ENCODE measurements at regions of chr22 and their contacts with region 1.

Region 1: DNA sequence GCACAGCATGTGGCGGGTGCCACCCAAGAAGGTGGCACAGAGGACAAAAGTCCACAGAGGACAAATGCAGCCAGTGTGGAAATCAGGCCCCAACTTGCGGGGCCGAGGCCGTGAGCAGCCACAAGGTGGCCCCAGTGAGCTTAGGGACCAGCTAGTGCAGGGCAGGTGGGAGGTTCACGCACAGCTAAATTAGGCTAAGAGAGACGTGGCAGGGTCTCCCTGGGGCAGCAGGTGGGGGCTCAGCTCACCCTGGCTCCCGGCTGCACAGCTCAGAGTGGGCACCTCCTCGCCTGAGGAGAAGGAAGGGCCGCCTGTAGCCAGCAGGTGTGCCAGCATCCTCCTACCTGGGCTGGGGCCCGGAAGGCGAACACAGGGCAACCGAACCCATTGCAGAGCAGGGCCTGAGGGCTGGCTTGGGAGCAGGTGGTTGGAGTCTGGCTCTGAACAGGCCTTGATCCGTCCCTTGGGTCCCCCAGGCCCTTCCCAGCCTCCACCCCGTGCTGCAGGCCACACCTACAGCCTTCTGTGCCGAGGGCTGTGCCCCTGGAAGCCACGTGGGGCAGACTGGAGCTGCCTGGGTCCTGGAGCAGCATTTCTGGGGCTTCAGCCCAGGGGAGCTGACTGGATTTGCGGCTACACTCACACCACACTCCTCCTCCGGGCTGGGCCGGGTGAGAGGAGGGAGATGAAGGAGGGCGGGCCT is 26.1 kb upstream of the CELSR1 start:
- H3K4me3 Mint-ChIP-seq: no peak overlapping the region
- H3K27ac Mint-ChIP-seq: peak overlapping the region; percentile 31
- H3K4me1 Mint-ChIP-seq: peaks cover 45% of the 10 kb centered on the region
- H3K27me3 Mint-ChIP-seq: peaks cover 7% of the 10 kb centered on the region

Region 2: GRCh38 chr22:46681010-46681409 is 117.5 kb after region 1 on chr22:
- intact Hi-C with region 1: loop called (anchors 5 kb)
- H3K4me3 Mint-ChIP-seq: no peak overlapping the region
- H3K27ac Mint-ChIP-seq: no peak overlapping the region
- H3K4me1 Mint-ChIP-seq: peaks cover 23% of the 10 kb centered on the region
- H3K27me3 Mint-ChIP-seq: no peaks in the 10 kb centered on the region

Measured in dendritic cell treated with granulocyte-macrophage colony-stimulating factor and Interleukin-4, amounts not matched to agents 40 ng/mL and 50 ng/mL, for 4 days (primary cell).